Mammary epithelial cell (primary cell): ENCODE measurements at regions of chr1 and their contacts with region 1.

Region 1: DNA sequence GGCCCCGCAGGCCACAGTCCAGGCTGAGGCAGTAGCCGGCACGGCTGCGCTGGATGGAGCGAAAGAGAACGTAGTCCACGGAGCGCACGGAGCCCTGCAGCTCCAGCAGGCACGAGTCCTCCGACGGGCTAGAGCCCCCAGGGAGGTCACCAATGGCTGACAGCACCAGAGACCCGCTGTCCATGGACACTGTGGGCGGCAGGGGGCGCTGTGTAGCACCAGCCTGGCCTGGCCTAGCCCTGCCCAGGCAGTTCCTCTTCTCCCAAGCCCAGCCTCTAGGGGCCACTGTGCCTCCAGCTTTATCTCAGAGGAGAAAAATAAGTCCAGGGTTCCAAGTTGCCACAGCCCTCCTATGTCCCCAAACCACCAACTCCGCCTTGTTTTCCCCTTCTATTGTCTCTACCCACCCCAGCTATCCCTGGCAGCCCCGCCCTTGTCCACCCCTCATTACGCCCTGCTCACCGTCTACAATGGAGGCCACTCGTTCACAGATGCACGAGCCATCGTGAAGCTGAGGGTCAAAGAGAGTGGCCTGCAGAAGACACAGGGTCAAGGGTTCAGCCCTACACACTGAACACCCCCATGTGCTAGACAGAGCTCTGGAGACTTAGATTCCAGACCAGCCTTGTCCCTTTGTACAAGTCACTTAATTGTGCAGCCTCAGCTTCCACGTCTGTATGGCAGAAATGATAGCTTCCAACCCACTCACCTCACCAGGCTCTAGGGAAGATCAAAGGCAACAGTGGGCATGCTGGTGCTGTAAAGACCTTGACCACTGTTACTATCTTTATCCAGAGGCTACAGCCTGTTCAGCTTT is 4.4 kb downstream of the ENTREP3 start:
- DNase-seq: peak; percentile 73
- H3K4me3 ChIP-seq: peak overlapping the region in 1 of 3 experiments; percentile 21
- H3K27ac ChIP-seq: no peak overlapping the region
- H3K4me1 ChIP-seq: peaks cover 30% of the 10 kb centered on the region
- H3K27me3 ChIP-seq: no peaks in the 10 kb centered on the region
- CTCF ChIP-seq: peak; percentile 100

Region 2: GRCh38 chr1:155208541-155209311 is 42.1 kb before region 1 on chr1 and contains the start of gene MTX1:
- CTCF ChIA-PET with region 1: interaction called, 3 read pairs
- dilution Hi-C with region 1: no loop called
- in situ Hi-C with region 1: no loop called
- intact Hi-C with region 1: loop called (anchors 1 kb)
- DNase-seq: peak; percentile 74
- H3K4me3 ChIP-seq: peak within 1 kb of the TSS; percentile 86 to 100 (median 100)
- H3K27ac ChIP-seq: peak within 1 kb of the TSS; percentile 98
- H3K4me1 ChIP-seq: peaks cover 27% of the 10 kb centered on the region
- H3K27me3 ChIP-seq: no peaks in the 10 kb centered on the region
- CTCF ChIP-seq: no peak
- total RNA-seq, gene MTX1: 34.2 to 49.3 TPM

Region 3: DNA sequence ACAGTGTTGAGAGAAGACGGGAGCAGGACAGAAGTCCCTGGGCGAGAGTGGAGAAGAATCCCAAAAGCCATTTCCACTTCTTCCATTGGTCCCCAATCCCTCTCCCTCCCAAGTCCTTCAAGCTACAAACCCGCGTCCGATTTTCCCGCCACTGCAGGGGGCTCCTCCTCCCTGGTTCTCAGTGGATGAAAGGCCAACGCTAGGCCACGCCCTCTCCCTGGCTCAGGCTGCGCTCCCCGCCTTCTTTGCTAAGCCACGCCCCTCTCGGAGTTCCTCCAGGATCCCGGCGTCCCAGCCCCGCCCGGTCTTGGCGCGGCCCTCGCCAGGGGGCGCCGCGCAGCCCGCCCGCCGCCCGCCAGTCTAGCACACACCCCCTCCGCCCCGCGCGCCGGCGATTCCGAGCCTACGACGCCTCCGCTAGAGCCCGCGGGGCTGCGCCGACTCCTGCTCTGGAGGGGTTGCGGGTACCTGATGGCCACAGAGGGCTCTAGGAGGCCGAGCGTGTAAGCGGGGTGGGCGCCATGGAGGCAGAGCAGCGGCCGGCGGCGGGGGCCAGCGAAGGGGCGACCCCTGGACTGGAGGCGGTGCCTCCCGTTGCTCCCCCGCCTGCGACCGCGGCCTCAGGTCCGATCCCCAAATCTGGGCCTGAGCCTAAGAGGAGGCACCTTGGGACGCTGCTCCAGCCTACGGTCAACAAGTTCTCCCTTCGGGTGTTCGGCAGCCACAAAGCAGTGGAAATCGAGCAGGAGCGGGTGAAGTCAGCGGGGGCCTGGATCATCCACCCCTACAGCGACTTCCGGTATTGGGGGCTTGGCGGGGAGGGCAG is 26.4 kb after region 1 on chr1 and contains the start of gene HCN3:
- CTCF ChIA-PET with region 1: interaction called, 5 read pairs
- dilution Hi-C with region 1: no loop called
- in situ Hi-C with region 1: no loop called
- intact Hi-C with region 1: loop called (anchors 1 kb)
- DNase-seq: peak; percentile 90
- H3K4me3 ChIP-seq: peak within 1 kb of the TSS; percentile 47 to 86 (median 68)
- H3K27ac ChIP-seq: no peak within 1 kb of the TSS
- H3K4me1 ChIP-seq: peaks cover 20% of the 10 kb centered on the region
- H3K27me3 ChIP-seq: no peaks in the 10 kb centered on the region
- CTCF ChIP-seq: peak; percentile 34 to 48
- total RNA-seq, gene HCN3: 1.3 to 4.8 TPM

Region 4: GRCh38 chr1:155308493-155309422 is 57.9 kb after region 1 on chr1 and contains the start of gene FDPS:
- CTCF ChIA-PET with region 1: no interaction called
- dilution Hi-C with region 1: no loop called
- in situ Hi-C with region 1: no loop called
- intact Hi-C with region 1: loop called (anchors 2 kb)
- DNase-seq: peak; percentile 100
- H3K4me3 ChIP-seq: peak within 1 kb of the TSS; percentile 73 to 86 (median 85)
- H3K27ac ChIP-seq: peak within 1 kb of the TSS; percentile 87
- H3K4me1 ChIP-seq: peaks cover 19% of the 10 kb centered on the region
- H3K27me3 ChIP-seq: no peaks in the 10 kb centered on the region
- CTCF ChIP-seq: no peak
- total RNA-seq, gene FDPS: 180 to 795 TPM

Region 5: GRCh38 chr1:155504207-155504606 is 253.4 kb after region 1 on chr1:
- CTCF ChIA-PET with region 1: no interaction called
- dilution Hi-C with region 1: no loop called
- in situ Hi-C with region 1: no loop called
- intact Hi-C with region 1: loop called (anchors 5 kb)
- DNase-seq: peak; percentile 16
- H3K4me3 ChIP-seq: no peak overlapping the region
- H3K27ac ChIP-seq: no peak overlapping the region
- H3K4me1 ChIP-seq: no peaks in the 10 kb centered on the region
- H3K27me3 ChIP-seq: no peaks in the 10 kb centered on the region
- CTCF ChIP-seq: peak; percentile 37 to 57

Region 6: GRCh38 chr1:155591770-155592169 is 340.9 kb after region 1 on chr1:
- CTCF ChIA-PET with region 1: interaction called, 4 read pairs
- dilution Hi-C with region 1: no loop called
- in situ Hi-C with region 1: no loop called
- intact Hi-C with region 1: loop called (anchors 1 kb)
- DNase-seq: peak; percentile 33
- H3K4me3 ChIP-seq: no peak overlapping the region
- H3K27ac ChIP-seq: no peak overlapping the region
- H3K4me1 ChIP-seq: no peaks in the 10 kb centered on the region
- H3K27me3 ChIP-seq: no peaks in the 10 kb centered on the region
- CTCF ChIP-seq: peak; percentile 43 to 50

Region 7: DNA sequence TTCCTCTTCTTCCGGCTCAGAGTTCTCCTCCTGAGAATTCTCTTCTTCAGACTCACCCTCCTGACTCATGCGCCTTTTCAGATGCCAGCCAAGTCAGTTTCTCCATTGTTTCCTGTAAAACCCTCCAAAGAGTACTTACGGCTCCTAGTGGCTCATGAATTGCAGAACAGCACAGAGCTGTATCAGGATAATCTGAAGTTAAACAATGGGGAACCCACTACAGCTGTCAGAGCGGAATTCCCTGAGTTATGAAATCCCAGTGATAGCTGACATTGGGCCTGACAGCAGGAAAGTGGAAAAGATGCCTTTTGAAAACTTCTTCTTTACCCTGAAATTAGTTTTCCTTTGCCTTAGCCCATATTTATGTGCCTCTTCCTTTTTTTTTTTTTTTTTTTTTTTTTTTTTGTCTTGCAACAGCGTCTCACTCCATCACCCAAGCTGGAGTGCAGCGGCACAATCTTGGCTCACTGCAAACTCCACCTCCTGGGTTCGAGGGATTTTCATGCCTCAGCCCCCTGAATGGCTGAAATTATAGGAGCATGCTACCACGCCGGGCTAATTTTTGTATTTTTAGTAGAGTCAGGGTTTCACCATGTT is 397.8 kb after region 1 on chr1:
- CTCF ChIA-PET with region 1: no interaction called
- dilution Hi-C with region 1: no loop called
- in situ Hi-C with region 1: no loop called
- intact Hi-C with region 1: loop called (anchors 1 kb)
- DNase-seq: peak; percentile 95
- H3K4me3 ChIP-seq: peak overlapping the region; percentile 39 to 58 (median 46)
- H3K27ac ChIP-seq: peak overlapping the region; percentile 78
- H3K4me1 ChIP-seq: peaks cover 56% of the 10 kb centered on the region
- H3K27me3 ChIP-seq: no peaks in the 10 kb centered on the region
- CTCF ChIP-seq: peak; percentile 73 to 80